ENCODE measurements at regions of chr16 and their contacts with region 1.

Region 1: DNA sequence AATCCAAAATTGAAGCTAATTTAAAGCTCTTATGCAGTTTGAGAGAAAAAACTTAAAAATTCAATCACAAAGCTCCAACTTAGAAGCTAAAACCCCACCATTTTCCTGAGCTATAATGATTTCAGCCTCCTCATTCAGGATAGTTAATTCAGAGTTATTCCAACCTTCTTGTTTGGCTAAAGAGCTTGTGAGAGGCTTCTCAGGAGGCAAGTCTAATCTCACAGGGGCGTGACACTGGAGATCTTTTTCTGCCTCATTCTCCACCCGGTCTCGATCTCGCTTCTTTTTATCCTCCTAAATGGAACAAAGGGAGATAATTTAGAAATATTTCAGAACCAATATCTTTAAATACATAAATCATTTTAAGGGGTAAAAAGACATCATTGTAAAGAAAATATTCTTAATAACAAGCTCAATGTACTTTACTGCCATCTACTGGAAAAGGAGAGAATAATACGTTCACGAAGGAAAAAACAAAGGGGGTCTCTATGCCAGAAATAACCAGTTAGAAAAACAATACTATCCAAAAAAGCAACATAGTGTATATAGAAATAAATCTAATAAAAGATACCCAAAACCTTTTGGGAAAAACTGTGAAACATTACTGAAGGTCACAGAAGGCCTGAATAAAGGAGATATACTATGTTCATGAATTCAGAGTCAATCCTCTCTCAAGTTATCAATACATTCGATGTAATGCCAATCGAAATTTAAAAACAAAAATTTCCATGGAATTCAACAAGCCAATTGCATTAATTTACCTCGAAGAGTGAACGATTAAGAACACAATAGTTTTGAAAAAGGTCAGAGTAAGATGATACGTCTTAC is 13.9 kb downstream of the BRD7 start:
- DNase-seq: no peak
- H3K4me3 ChIP-seq: no peak overlapping the region
- H3K27ac ChIP-seq: no peak overlapping the region
- H3K27me3 ChIP-seq: no peaks in the 10 kb centered on the region
- CTCF ChIP-seq: peak; percentile 65

Region 2: DNA sequence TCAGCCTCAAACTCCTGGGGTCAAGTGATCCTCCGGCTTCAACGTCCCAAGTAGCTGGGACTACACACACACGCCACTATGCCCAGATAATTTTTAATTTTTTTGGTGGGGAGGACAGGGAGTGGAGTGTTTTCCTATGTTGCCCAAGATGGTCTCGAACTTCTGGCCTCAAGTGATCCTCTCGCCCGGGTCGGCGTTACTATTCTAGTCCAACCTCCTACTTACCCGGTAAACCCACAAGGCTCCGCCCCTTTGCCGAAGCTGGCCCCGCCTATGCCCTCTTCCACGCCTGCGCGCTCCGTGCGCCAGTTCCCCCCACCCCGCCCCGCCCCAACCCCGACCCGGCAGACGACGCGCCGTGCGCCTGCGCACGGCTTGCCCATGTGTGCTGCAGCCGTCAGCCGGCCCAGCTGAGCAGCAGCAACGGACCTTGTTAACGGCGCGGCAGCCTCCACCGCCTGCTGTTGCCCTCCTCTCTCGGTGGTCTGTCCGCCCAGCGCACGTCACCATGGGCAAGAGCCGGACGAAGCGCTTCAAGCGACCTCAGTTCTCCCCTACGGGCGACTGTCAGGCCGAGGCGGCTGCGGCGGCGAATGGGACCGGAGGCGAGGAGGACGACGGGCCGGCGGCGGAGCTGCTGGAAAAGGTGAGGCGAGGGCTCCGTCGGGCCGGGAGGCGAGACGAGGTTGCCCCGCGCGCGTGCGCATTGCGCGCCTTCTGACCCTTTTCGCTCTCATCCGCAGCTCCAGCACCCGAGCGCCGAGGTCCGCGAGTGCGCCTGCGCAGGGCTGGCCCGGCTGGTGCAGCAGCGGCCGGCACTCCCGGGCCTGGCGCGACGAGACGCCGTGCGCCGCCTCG is 289.0 kb before region 1 on chr16 and contains the start of gene HEATR3:
- CTCF ChIA-PET with region 1: interaction called, 28 read pairs
- POLR2A ChIA-PET with region 1: no interaction called
- DNase-seq: peak; percentile 85
- H3K4me3 ChIP-seq: peak within 1 kb of the TSS; percentile 99
- H3K27ac ChIP-seq: peak within 1 kb of the TSS; percentile 84
- H3K27me3 ChIP-seq: no peaks in the 10 kb centered on the region
- CTCF ChIP-seq: no peak
- polyA plus RNA-seq, gene HEATR3: 15.0 and 17.1 TPM in 2 replicates

Region 3: DNA sequence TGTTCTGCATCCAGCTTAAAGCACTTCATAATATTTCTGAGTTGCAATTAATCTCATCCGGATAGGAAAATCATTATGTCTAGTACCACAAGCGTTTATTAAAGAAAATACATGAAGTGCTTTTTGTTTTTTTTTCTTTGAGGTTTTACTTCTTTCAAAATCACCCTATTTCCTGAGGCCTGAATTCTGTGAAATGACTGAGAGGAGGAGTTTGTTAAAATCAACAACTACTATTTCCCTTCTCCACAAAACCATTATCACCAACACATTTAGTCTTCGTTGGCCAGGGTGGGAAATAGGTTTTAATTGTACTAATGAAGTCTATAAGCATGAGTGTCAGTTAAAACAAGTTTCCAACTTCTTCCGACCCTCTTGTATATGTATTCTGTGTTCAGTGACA is 139.2 kb before region 1 on chr16:
- CTCF ChIA-PET with region 1: interaction called, 144 read pairs
- POLR2A ChIA-PET with region 1: no interaction called
- DNase-seq: no peak
- H3K4me3 ChIP-seq: no peak overlapping the region
- H3K27ac ChIP-seq: no peak overlapping the region
- H3K27me3 ChIP-seq: no peaks in the 10 kb centered on the region
- CTCF ChIP-seq: no peak

Region 4: GRCh38 chr16:50326949-50327402 is 27.9 kb before region 1 on chr16:
- CTCF ChIA-PET with region 1: interaction called, 88 read pairs
- POLR2A ChIA-PET with region 1: no interaction called
- DNase-seq: no peak
- H3K4me3 ChIP-seq: no peak overlapping the region
- H3K27ac ChIP-seq: no peak overlapping the region
- H3K27me3 ChIP-seq: no peaks in the 10 kb centered on the region
- CTCF ChIP-seq: peak; percentile 58

Region 5: DNA sequence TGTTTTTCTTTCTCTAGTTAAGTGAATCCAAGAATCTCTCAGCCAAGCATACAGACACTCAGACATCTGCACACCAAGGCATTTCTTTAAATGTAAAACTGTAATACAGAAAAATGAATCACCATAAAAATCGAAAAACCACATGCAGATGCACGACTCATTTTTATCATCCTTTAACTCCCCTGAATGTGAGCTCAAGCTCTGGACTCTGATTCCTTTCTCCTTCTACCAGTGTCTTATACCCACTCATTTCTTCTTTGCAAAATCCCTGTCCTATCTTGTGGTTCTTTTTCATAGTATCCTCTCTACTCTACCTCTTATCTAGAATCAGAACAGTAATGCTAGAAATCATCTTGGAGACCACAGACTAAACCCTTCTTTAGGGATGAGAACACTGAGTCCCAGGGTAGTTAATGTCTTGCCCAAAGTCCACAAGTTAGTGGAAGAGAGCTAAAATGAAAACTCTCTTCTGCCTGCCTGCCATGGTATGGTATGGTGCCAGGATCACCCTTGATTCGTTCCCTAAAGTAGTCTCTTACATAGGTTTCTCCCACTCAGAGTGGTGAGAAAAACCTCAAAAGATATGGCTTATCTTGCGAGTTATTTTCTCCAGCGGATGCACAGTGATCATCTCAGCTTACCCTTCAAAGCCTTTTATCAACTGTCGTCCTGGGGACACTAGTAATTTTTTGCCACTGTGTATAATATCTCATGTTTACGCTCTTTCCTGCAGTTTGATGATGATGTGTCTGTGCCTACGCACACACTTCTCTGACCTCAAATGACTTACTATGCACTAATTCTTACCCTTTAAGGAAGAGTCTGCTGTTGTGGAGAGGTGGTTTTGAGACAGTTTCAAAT is 16.2 kb before region 1 on chr16:
- CTCF ChIA-PET with region 1: interaction called, 28 read pairs
- POLR2A ChIA-PET with region 1: no interaction called
- DNase-seq: no peak
- H3K4me3 ChIP-seq: no peak overlapping the region
- H3K27ac ChIP-seq: no peak overlapping the region
- H3K27me3 ChIP-seq: no peaks in the 10 kb centered on the region
- CTCF ChIP-seq: no peak

Region 6: GRCh38 chr16:50368410-50369132 is 13.7 kb after region 1 on chr16 and contains the start of gene BRD7:
- CTCF ChIA-PET with region 1: interaction called, 24 read pairs
- POLR2A ChIA-PET with region 1: no interaction called
- DNase-seq: no peak
- H3K4me3 ChIP-seq: peak within 1 kb of the TSS; percentile 70
- H3K27ac ChIP-seq: no peak within 1 kb of the TSS
- H3K27me3 ChIP-seq: peaks cover 4% of the 10 kb centered on the region
- CTCF ChIP-seq: peak; percentile 30
- polyA plus RNA-seq, gene BRD7: 49.2 and 69.2 TPM in 2 replicates

Region 7: GRCh38 chr16:50467943-50468760 is 113.3 kb after region 1 on chr16:
- CTCF ChIA-PET with region 1: no interaction called
- POLR2A ChIA-PET with region 1: no interaction called
- DNase-seq: no peak
- H3K4me3 ChIP-seq: no peak overlapping the region
- H3K27ac ChIP-seq: no peak overlapping the region
- H3K27me3 ChIP-seq: peaks cover 28% of the 10 kb centered on the region
- CTCF ChIP-seq: no peak